GM12878 (cell line): ENCODE measurements at regions of chr1 and their contacts with region 1.

Region 1: GRCh38 chr1:224223819-224224714 is 41.0 kb downstream of the DEGS1 start:
- DNase-seq: no peak
- ATAC-seq: no peak
- H3K4me3 ChIP-seq: no peak overlapping the region
- H3K27ac ChIP-seq: no peak overlapping the region
- H3K4me1 ChIP-seq: no peaks in the 10 kb centered on the region
- H3K27me3 ChIP-seq: no peaks in the 10 kb centered on the region
- CTCF ChIP-seq: no peak
- EP300 ChIP-seq: no peak
- POLR2A ChIP-seq: no peak
- RAD21 ChIP-seq: no peak

Region 2: GRCh38 chr1:224160171-224160682 is 63.8 kb before region 1 on chr1:
- CTCF ChIA-PET with region 1: no interaction called
- POLR2A ChIA-PET with region 1: no interaction called
- RAD21 ChIA-PET with region 1: no interaction called
- SMC1A ChIA-PET with region 1: no interaction called
- in situ Hi-C with region 1: no loop called
- intact Hi-C with region 1: no loop called
- DNase-seq: no peak
- ATAC-seq: no peak
- H3K4me3 ChIP-seq: no peak overlapping the region
- H3K27ac ChIP-seq: no peak overlapping the region
- H3K4me1 ChIP-seq: no peaks in the 10 kb centered on the region
- H3K27me3 ChIP-seq: no peaks in the 10 kb centered on the region
- CTCF ChIP-seq: no peak
- EP300 ChIP-seq: no peak
- POLR2A ChIP-seq: no peak
- RAD21 ChIP-seq: no peak

Region 3: GRCh38 chr1:224238756-224239155 is 14.7 kb after region 1 on chr1:
- CTCF ChIA-PET with region 1: interaction called, 5 read pairs
- POLR2A ChIA-PET with region 1: no interaction called
- RAD21 ChIA-PET with region 1: no interaction called
- SMC1A ChIA-PET with region 1: interaction called, 4 read pairs
- in situ Hi-C with region 1: no loop called
- intact Hi-C with region 1: loop called (anchors 2 kb)
- DNase-seq: no peak
- ATAC-seq: no peak
- H3K4me3 ChIP-seq: no peak overlapping the region
- H3K27ac ChIP-seq: no peak overlapping the region
- H3K4me1 ChIP-seq: no peaks in the 10 kb centered on the region
- H3K27me3 ChIP-seq: no peaks in the 10 kb centered on the region
- CTCF ChIP-seq: no peak
- EP300 ChIP-seq: no peak
- POLR2A ChIP-seq: no peak
- RAD21 ChIP-seq: no peak